ENCODE measurements at regions of chr7 and their contacts with region 1.

Region 1: GRCh38 chr7:55309040-55309991 is 55.8 kb upstream of the LANCL2 start:
- DNase-seq: peak; percentile 0 to 87 (median 63)
- H3K4me3 ChIP-seq: peak overlapping the region; percentile 35
- H3K4me3 Mint-ChIP-seq: peak overlapping the region; percentile 13 to 76 (median 52)
- H3K27ac ChIP-seq: peak overlapping the region; percentile 52
- H3K27ac Mint-ChIP-seq: peak overlapping the region; percentile 88 to 97 (median 95)
- H3K4me1 ChIP-seq: peaks cover 32% of the 10 kb centered on the region
- H3K4me1 Mint-ChIP-seq: peaks cover 52 to 72% (median 57%) of the 10 kb centered on the region in 3 donors
- H3K27me3 ChIP-seq: no peaks in the 10 kb centered on the region
- H3K27me3 Mint-ChIP-seq: peaks cover 0 to 4% of the 10 kb centered on the region in 2 donors

Region 2: DNA sequence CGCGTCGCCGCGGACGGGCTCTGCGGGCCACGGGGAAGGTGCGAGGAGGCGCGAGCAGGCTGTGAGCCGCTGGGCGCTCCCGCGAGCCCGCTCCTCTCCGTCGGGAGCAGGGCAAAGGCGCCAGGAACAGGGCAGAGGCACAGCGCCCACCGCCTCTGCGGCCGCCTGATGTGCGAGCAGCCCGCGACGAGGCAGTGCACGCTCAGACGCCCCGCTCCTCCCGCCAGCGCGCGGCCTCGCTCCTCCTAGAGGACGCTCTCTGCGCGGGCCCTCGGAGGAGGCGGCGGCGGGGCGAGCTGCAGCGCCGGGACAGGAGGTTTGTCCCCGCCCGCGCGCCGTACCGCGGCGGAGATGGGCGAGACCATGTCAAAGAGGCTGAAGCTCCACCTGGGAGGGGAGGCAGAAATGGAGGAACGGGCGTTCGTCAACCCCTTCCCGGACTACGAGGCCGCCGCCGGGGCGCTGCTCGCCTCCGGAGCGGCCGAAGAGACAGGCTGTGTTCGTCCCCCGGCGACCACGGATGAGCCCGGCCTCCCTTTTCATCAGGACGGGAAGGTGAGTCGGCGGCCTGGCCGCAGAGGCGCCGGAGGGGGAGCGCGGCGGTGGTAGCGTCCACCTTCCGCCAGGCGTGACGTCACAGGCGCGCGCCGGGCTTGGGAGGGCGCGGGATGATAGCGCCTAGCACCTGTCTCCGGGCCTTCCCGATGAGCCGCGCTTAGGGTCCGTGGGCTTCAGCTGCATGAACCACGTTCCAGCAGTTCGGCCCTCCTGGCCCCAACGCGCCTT is 56.6 kb after region 1 on chr7:
- CTCF ChIA-PET with region 1: interaction called, 25 read pairs
- POLR2A ChIA-PET with region 1: interaction called, 26 read pairs
- DNase-seq: peak; percentile 93 to 99 (median 97)
- H3K4me3 ChIP-seq: peak overlapping the region; percentile 100
- H3K4me3 Mint-ChIP-seq: peak overlapping the region in 6 of 7 donors; percentile 94 to 96 (median 95)
- H3K27ac ChIP-seq: peak overlapping the region; percentile 98
- H3K27ac Mint-ChIP-seq: peak overlapping the region in 7 of 8 donors; percentile 98 to 99 (median 99)
- H3K4me1 ChIP-seq: peaks cover 25% of the 10 kb centered on the region
- H3K4me1 Mint-ChIP-seq: peaks cover 8 to 29% (median 20%) of the 10 kb centered on the region in 3 donors
- H3K27me3 ChIP-seq: no peaks in the 10 kb centered on the region
- H3K27me3 Mint-ChIP-seq: peaks cover 0 to 4% of the 10 kb centered on the region in 2 donors

Measured in CD8-positive, alpha-beta memory T cell (primary cell).